PC-3 (cell line): ENCODE measurements at regions of chr1 and their contacts with region 1.

Region 1: GRCh38 chr1:87880747-87881133 is 552.1 kb downstream of the LMO4 start:
- DNase-seq: peak; percentile 45
- ATAC-seq: peak; percentile 54
- H3K4me3 ChIP-seq: no peak overlapping the region
- H3K27ac ChIP-seq: no peak overlapping the region
- H3K4me1 ChIP-seq: peaks cover 10% of the 10 kb centered on the region
- H3K27me3 ChIP-seq: no peaks in the 10 kb centered on the region
- CTCF ChIP-seq: no peak

Region 2: DNA sequence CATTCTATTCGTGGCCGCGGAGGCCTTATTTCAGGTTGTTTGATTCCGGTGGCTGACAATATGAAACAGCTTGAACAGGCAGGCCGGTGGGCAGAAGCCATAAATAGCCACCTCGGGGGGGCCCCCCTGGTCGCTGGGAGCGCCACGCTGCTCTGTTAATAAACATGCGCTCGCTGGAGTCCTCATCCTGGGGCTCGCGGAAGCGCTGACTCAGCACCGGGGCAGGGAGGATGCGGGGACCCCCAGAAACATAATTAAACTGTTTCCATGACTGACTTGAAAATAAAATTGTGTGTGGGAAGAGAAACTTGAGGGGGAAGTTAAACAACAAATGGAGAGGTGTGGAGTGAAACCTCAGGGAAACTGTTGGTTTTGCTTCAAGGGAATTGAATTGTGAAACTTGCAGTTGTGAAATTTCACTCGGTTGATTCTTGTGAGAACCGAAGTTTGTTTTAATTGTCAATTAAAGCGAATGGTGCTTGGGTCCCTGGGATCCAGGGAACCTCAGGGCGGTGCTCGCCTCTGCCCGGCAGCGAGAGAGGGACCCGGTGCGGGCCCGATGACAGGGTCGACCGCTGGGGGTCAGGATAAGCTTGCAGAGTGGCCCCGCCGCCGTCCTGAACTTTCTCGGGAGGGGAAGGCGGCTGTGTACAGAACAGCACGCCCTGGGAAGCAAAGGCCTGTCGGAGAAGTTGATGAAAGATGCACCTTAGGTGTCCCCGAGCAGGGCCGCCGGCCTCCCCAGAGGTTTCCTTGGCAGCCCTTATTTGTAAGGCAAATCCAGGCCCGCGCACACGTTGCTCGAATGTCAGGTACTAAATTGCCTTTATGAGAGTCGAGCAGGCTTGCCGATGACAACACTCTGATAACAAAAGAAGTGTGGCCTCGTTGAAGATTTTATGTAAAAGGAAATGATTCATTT is 729.0 kb before region 1 on chr1:
- CTCF ChIA-PET with region 1: no interaction called
- POLR2A ChIA-PET with region 1: no interaction called
- intact Hi-C with region 1: no loop called
- DNase-seq: no peak
- ATAC-seq: no peak
- H3K4me3 ChIP-seq: no peak overlapping the region
- H3K27ac ChIP-seq: no peak overlapping the region
- H3K4me1 ChIP-seq: peaks cover 6% of the 10 kb centered on the region; the same call in 1 of the 2 replicates
- H3K27me3 ChIP-seq: no peaks in the 10 kb centered on the region
- CTCF ChIP-seq: no peak

Region 3: DNA sequence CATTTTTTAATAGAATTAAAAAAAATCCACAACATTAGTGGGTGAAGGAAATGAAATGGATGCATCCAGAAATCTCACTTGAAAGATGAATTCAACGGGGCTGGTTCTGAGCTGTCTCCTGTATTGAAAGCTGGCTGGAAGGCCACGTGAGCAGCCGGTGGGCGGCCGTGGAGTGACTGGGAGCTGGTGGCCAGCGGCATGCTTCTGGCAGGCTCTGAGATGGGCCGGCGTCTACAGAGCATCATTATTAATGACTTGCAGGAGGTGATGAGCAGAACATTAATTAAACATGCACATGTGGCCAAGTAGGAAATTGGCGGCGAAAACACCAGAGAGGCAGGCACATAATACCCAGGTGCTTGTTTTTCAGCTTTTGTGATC is 667.6 kb before region 1 on chr1:
- CTCF ChIA-PET with region 1: no interaction called
- POLR2A ChIA-PET with region 1: interaction called, 11 read pairs
- intact Hi-C with region 1: no loop called
- DNase-seq: no peak
- ATAC-seq: no peak
- H3K4me3 ChIP-seq: no peak overlapping the region
- H3K27ac ChIP-seq: no peak overlapping the region
- H3K4me1 ChIP-seq: no peaks in the 10 kb centered on the region
- H3K27me3 ChIP-seq: no peaks in the 10 kb centered on the region
- CTCF ChIP-seq: no peak